B cell (primary cell): ENCODE measurements at regions of chr11 and their contacts with region 1.

Region 1: GRCh38 chr11:102306048-102306585 is 11.2 kb upstream of the BIRC3 start:
- DNase-seq: no peak
- ATAC-seq: peak; percentile 19
- H3K4me3 ChIP-seq: peak overlapping the region in 2 of 5 experiments; percentile 16 to 42
- H3K4me3 Mint-ChIP-seq: peak overlapping the region; percentile 60
- H3K27ac ChIP-seq: peak overlapping the region; percentile 82 to 92
- H3K27ac Mint-ChIP-seq: peak overlapping the region; percentile 93
- H3K4me1 ChIP-seq: peaks cover 69 to 78% of the 10 kb centered on the region in 2 donors
- H3K4me1 Mint-ChIP-seq: peaks cover 66% of the 10 kb centered on the region
- H3K27me3 ChIP-seq: no peaks in the 10 kb centered on the region
- H3K27me3 Mint-ChIP-seq: no peaks in the 10 kb centered on the region
- CTCF ChIP-seq: no peak

Region 2: GRCh38 chr11:102323542-102324251 is 17.6 kb after region 1 on chr11:
- CTCF ChIA-PET with region 1: interaction called, 36 read pairs
- POLR2A ChIA-PET with region 1: interaction called, 21 read pairs
- intact Hi-C with region 1: no loop called
- DNase-seq: no peak
- ATAC-seq: no peak
- H3K4me3 ChIP-seq: peak overlapping the region in 1 of 5 experiments; percentile 9
- H3K4me3 Mint-ChIP-seq: peak overlapping the region; percentile 32
- H3K27ac ChIP-seq: peak overlapping the region in 1 of 2 donors; percentile 98
- H3K27ac Mint-ChIP-seq: peak overlapping the region; percentile 65
- H3K4me1 ChIP-seq: peaks cover 38 to 50% of the 10 kb centered on the region in 2 donors
- H3K4me1 Mint-ChIP-seq: peaks cover 52% of the 10 kb centered on the region
- H3K27me3 ChIP-seq: no peaks in the 10 kb centered on the region
- H3K27me3 Mint-ChIP-seq: no peaks in the 10 kb centered on the region
- CTCF ChIP-seq: no peak

Region 3: DNA sequence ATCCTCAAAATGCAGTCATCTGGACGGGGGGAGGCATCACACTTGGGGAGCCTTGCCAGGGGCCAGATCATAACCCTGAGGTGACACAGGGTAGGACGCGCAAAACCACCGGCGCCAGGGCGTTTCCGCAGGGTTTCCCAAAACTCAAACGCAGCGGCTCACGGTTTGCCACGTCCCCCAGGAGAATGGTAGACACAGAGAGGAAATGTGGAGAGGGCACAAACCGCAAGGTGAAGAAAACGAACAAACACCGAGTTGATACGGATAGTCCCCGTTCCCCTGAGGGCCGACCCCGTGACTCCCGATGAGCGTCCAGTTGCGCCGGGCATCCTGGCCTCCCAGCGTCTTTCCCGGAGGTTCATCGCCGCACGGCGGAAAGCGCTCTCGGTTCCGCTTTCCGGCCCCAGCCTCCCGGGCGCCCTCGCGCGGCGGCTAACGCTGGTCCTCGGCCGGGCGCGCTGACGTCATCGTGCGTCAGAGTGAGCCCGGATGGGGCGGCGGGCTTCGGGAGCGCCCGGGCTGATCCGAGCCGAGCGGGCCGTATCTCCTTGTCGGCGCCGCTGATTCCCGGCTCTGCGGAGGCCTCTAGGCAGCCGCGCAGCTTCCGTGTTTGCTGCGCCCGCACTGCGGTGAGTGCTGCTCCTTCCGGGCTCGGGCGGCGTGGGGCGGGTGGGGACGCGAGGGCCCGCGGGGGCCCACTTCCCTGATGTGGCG is 40.8 kb after region 1 on chr11 and contains the start of gene BIRC2:
- CTCF ChIA-PET with region 1: interaction called, 9 read pairs
- POLR2A ChIA-PET with region 1: interaction called, 4 read pairs
- intact Hi-C with region 1: loop called (anchors 5 kb)
- DNase-seq: peak; percentile 98
- ATAC-seq: peak; percentile 88
- H3K4me3 ChIP-seq: peak within 1 kb of the TSS; percentile 63 to 98 (median 92)
- H3K4me3 Mint-ChIP-seq: peak within 1 kb of the TSS; percentile 90
- H3K27ac ChIP-seq: peak within 1 kb of the TSS; percentile 94 to 97
- H3K27ac Mint-ChIP-seq: peak within 1 kb of the TSS; percentile 98
- H3K4me1 ChIP-seq: peaks cover 14 to 21% of the 10 kb centered on the region in 2 donors
- H3K4me1 Mint-ChIP-seq: peaks cover 36% of the 10 kb centered on the region
- H3K27me3 ChIP-seq: no peaks in the 10 kb centered on the region
- H3K27me3 Mint-ChIP-seq: no peaks in the 10 kb centered on the region
- CTCF ChIP-seq: peak; percentile 73
- total RNA-seq, gene BIRC2: 46.7 and 51.0 TPM in 2 replicates